T-cell (primary cell): ENCODE measurements at regions of chr11 and their contacts with region 1.

Region 1: GRCh38 chr11:18588297-18589252 is at the start of gene UEVLD:
- DNase-seq: peak in 32 of 35 experiments; percentile 4 to 76 (median 22)
- ATAC-seq: peak; percentile 47 to 53 (median 50)
- H3K4me3 ChIP-seq: peak within 1 kb of the TSS; percentile 89 to 97
- H3K4me3 Mint-ChIP-seq: no peak within 1 kb of the TSS
- H3K27ac ChIP-seq: peak within 1 kb of the TSS; percentile 96
- H3K27ac Mint-ChIP-seq: no peak within 1 kb of the TSS
- H3K4me1 ChIP-seq: peaks cover 0 to 30% of the 10 kb centered on the region in 2 experiments
- H3K4me1 Mint-ChIP-seq: peaks cover 0 to 10% (median 3%) of the 10 kb centered on the region in 3 donors
- H3K27me3 ChIP-seq: no peaks in the 10 kb centered on the region
- H3K27me3 Mint-ChIP-seq: no peaks in the 10 kb centered on the region
- total RNA-seq, gene UEVLD: 3.9 to 9.0 (median 7.1) TPM

Region 2: GRCh38 chr11:18419040-18419439 is 169.5 kb before region 1 on chr11:
- CTCF ChIA-PET with region 1: no interaction called
- POLR2A ChIA-PET with region 1: no interaction called
- DNase-seq: no peak
- ATAC-seq: no peak
- H3K4me3 ChIP-seq: no peak overlapping the region
- H3K4me3 Mint-ChIP-seq: no peak overlapping the region
- H3K27ac ChIP-seq: no peak overlapping the region
- H3K27ac Mint-ChIP-seq: no peak overlapping the region
- H3K4me1 ChIP-seq: no peaks in the 10 kb centered on the region
- H3K4me1 Mint-ChIP-seq: peaks cover 2 to 10% (median 9%) of the 10 kb centered on the region in 3 donors
- H3K27me3 ChIP-seq: no peaks in the 10 kb centered on the region
- H3K27me3 Mint-ChIP-seq: no peaks in the 10 kb centered on the region

Region 3: DNA sequence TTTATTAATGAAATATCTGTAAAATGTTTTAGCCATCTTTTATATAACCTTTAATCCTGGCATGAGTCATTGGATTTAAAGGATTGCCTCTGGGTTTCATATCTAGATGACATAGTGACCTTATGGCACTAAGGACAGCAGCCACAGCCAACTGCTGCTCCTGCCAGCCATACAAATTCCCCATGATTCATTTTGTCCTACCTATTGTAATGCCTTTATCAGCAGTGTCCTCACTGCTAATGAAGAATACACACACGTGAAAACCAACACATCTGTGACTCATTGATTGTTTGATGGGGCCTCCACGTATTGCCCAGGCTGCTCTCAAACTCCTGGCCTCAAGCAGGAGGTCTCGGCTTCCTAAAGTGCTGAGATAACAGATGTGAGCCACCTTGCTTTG is 131.1 kb before region 1 on chr11:
- CTCF ChIA-PET with region 1: no interaction called
- POLR2A ChIA-PET with region 1: no interaction called
- DNase-seq: no peak
- ATAC-seq: no peak
- H3K4me3 ChIP-seq: no peak overlapping the region
- H3K4me3 Mint-ChIP-seq: no peak overlapping the region
- H3K27ac ChIP-seq: no peak overlapping the region
- H3K27ac Mint-ChIP-seq: no peak overlapping the region
- H3K4me1 ChIP-seq: no peaks in the 10 kb centered on the region
- H3K4me1 Mint-ChIP-seq: peaks cover 0 to 2% (median 0%) of the 10 kb centered on the region in 3 donors
- H3K27me3 ChIP-seq: peaks cover 0 to 7% of the 10 kb centered on the region in 2 experiments
- H3K27me3 Mint-ChIP-seq: peaks cover 4 to 5% of the 10 kb centered on the region in 2 donors

Region 4: GRCh38 chr11:18721561-18722292 is 133.2 kb after region 1 on chr11:
- CTCF ChIA-PET with region 1: interaction called in 1 of 2 experiments, 3 read pairs
- POLR2A ChIA-PET with region 1: interaction called in 1 of 2 experiments, 13 read pairs
- DNase-seq: peak in 22 of 35 experiments; percentile 7 to 75 (median 32)
- ATAC-seq: peak; percentile 60 to 66 (median 64)
- H3K4me3 ChIP-seq: peak overlapping the region; percentile 77 to 89
- H3K4me3 Mint-ChIP-seq: peak overlapping the region; percentile 80 to 92 (median 89)
- H3K27ac ChIP-seq: peak overlapping the region; percentile 0
- H3K27ac Mint-ChIP-seq: peak overlapping the region; percentile 31 to 68
- H3K4me1 ChIP-seq: peaks cover 0 to 20% of the 10 kb centered on the region in 2 experiments
- H3K4me1 Mint-ChIP-seq: peaks cover 5 to 9% (median 6%) of the 10 kb centered on the region in 3 donors
- H3K27me3 ChIP-seq: peaks cover 0 to 3% of the 10 kb centered on the region in 2 experiments
- H3K27me3 Mint-ChIP-seq: peaks cover 0 to 4% of the 10 kb centered on the region in 2 donors

Region 5: DNA sequence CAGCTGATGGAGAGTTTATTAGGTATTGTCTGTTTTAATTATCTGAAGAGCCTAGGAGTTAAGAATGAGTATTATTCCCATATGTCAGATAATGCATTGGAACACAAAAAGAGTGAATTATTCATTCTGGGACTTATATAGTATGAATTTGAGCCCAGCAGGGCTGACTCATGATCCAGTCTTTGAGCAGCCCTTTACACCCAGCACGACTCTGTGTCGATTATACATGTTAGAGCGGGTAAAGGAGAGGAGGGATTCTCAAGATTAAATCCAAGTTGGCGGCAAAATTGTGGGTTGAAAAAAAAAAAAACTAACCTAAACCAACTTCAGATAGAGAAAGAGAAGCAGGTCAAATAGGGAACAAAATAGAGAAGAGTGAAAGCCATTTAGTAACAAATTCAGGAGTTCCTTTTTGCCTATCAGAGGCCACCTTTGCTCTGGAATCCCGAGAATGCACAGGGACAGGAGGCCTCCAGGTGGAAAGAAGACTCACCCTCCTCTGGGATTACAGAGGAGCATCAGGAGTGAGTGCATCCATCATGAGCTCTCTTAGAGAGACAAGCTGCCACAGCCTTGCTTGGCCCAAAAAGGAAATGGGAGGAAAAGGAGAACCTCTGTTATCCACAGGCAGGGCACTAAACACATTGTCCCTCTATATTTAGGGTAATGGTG is 347.6 kb after region 1 on chr11:
- CTCF ChIA-PET with region 1: no interaction called
- POLR2A ChIA-PET with region 1: no interaction called
- DNase-seq: no peak
- ATAC-seq: no peak
- H3K4me3 ChIP-seq: no peak overlapping the region
- H3K4me3 Mint-ChIP-seq: no peak overlapping the region
- H3K27ac ChIP-seq: no peak overlapping the region
- H3K27ac Mint-ChIP-seq: no peak overlapping the region
- H3K4me1 ChIP-seq: no peaks in the 10 kb centered on the region
- H3K4me1 Mint-ChIP-seq: no peaks in the 10 kb centered on the region
- H3K27me3 ChIP-seq: peaks cover 0 to 9% of the 10 kb centered on the region in 2 experiments
- H3K27me3 Mint-ChIP-seq: peaks cover 11 to 12% of the 10 kb centered on the region in 2 donors